ENCODE measurements at regions of chr1 and their contacts with region 1.

Region 1: DNA sequence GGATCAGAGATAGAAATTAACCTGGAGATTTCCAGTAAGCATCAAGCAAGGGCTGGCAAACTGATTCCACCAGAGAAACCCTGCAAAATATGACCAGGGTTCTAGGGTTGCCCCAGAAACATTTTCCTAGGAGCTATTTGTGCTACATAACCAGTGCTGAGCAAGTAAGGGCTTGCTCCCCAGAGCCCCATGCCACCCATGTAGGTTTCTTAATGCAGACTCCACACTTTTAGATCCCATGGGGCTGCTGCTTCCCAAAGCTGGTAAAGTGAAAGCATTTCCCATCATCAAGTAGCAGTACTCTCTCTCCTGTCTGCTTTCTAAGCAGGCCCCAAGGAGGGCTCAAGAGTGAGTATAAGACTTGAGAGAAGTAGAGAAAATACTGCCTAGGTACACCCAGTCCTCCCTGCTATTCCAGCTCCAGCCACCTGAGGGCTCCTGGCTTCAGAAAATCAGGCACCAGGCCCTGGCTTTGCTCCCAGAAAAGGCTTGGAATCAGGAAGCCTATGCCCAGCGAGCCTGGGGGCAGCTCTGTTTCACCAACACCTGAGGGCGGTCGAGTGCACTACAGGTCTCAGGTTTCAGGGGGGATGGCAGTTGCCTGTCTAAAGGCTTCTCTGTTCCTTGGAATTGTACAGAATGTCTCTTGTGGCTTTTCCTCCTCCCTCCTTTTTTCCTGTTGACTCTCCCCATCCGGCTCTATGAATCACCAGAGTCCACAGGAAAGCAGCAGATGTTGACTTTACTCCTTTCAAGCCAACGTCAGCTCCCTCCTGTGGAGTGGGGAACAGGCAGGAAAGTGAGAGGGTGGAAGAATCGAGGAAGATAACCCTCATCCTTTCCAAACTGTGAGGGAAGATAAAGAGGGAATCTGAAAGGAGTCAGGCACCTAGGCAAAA is 6.2 kb upstream of the ANKRD35 start:
- DNase-seq: peak; percentile 99
- ATAC-seq: peak; percentile 94
- H3K4me3 ChIP-seq: peak overlapping the region in 1 of 3 experiments; percentile 21; a peak in 2 of 6 replicates
- H3K27ac ChIP-seq: peak overlapping the region; percentile 63
- H3K4me1 ChIP-seq: peaks cover 81% of the 10 kb centered on the region
- H3K27me3 ChIP-seq: no peaks in the 10 kb centered on the region
- CTCF ChIP-seq: peak; percentile 98
- EP300 ChIP-seq: peak in 1 of 2 experiments; percentile 90; a peak in 2 of 4 replicates
- POLR2A ChIP-seq: no peak
- RAD21 ChIP-seq: peak; percentile 99

Region 2: DNA sequence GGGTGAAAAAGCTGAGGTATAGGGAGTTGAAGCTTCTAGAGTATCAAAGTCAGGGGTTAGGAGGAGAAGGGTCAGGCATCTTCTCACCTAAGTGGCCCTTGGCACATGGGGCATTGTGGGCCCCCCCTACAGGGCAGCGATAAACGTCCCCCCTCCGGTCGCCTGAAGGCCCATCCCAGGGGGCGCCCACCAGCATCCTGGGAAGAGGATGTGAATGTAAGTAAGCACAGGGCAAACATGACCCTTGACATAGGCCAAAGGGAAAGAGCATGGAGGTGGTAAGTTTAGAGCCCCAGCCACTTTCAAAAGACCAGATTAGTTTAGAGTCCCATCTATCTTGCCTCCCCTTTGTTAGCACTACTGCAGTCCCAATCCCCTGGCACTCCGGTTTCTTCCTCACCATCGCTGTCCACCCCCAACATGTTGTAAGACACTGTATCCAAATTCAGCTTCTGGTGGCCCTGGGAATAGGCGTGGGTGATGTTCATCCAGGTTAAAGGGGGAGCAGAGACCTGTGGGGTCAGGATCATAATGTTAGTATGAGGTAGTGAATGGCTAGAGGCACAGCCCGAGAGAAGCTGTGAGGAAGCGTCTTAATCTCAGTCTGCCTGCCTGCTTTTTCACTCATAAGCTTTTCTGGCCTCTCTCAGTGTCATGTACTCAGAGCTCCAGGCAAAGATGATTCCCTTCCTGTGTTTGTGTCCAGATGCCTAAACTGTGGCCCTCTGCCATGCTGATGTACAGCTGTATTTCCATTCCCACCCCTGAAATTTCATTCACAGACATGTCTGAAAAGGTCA is 15.3 kb after region 1 on chr1:
- CTCF ChIA-PET with region 1: interaction called, 93 read pairs
- POLR2A ChIA-PET with region 1: interaction called, 25 read pairs
- in situ Hi-C with region 1: no loop called
- intact Hi-C with region 1: loop called (anchors 1 kb)
- DNase-seq: no peak
- ATAC-seq: peak; percentile 57
- H3K4me3 ChIP-seq: peak overlapping the region in 1 of 3 experiments; percentile 5; a peak in 2 of 6 replicates
- H3K27ac ChIP-seq: no peak overlapping the region
- H3K4me1 ChIP-seq: peaks cover 58% of the 10 kb centered on the region
- H3K27me3 ChIP-seq: no peaks in the 10 kb centered on the region
- CTCF ChIP-seq: peak; percentile 37
- EP300 ChIP-seq: no peak
- POLR2A ChIP-seq: no peak
- RAD21 ChIP-seq: no peak

Region 3: DNA sequence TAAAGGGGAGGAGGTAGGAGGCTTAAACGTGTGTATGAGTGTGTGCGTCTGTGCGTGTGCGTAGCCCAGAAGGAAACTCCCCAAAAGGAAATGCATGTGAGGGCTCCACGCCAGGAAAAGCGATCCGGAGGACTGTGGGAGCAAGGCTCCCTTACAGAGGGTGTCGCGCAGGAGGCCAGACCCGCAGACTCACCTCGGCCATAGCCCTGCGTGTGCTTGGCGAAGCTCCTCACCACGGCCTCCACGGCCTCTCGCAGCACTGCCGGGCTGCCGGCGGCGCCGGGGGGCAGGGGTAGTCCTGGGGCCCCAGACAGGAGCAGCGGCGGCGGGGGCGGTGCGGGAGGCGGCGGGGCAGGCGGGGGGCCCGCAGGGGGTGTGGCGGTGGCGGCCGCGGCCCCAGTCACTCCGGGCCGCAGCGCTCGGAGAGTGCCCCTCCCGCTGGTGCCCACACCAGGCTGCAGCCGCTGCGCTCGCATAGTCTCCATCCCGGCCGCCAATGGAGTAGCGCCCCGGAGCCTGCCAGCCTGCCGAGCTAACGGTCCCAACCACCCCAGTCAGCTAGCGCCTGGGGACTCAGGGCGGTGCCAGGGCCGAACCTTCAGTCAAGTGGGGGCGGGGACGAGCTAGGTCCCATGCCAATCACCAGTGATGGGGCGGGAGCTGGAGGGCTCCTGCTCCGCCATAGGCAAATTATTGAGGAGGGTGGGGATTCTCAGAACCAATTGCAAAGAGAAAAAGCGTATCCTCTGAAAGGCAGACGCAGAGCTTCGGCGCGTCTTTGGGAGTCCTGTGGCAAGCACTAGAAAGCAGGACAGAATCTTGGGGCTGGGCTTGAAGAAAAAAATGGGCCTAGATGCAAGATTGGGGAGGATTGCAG is 65.8 kb after region 1 on chr1 and contains the start of gene LIX1L:
- CTCF ChIA-PET with region 1: no interaction called
- POLR2A ChIA-PET with region 1: interaction called, 3 read pairs
- in situ Hi-C with region 1: no loop called
- intact Hi-C with region 1: loop called (anchors 5 kb)
- DNase-seq: peak; percentile 91
- ATAC-seq: peak; percentile 89
- H3K4me3 ChIP-seq: peak within 1 kb of the TSS; percentile 73 to 89 (median 80)
- H3K27ac ChIP-seq: peak within 1 kb of the TSS; percentile 61
- H3K4me1 ChIP-seq: peaks cover 72% of the 10 kb centered on the region
- H3K27me3 ChIP-seq: peaks cover 0 to 25% of the 10 kb centered on the region in 2 experiments; a peak in 3 of 5 replicates
- CTCF ChIP-seq: no peak
- EP300 ChIP-seq: no peak
- POLR2A ChIP-seq: peak; percentile 59 to 71
- RAD21 ChIP-seq: no peak
- total RNA-seq, gene LIX1L: 8.1 and 10.9 TPM in 2 replicates

Region 4: GRCh38 chr1:145963995-145964901 is 72.4 kb after region 1 on chr1 and contains the starts of genes ANKRD34A and POLR3GL:
- CTCF ChIA-PET with region 1: no interaction called
- POLR2A ChIA-PET with region 1: interaction called, 11 read pairs
- in situ Hi-C with region 1: no loop called
- intact Hi-C with region 1: loop called (anchors 5 kb)
- DNase-seq: peak; percentile 92
- ATAC-seq: peak; percentile 88
- H3K4me3 ChIP-seq: peak within 1 kb of the TSS; percentile 77 to 84 (median 82)
- H3K27ac ChIP-seq: peak within 1 kb of the TSS; percentile 70
- H3K4me1 ChIP-seq: peaks cover 45% of the 10 kb centered on the region
- H3K27me3 ChIP-seq: peaks cover 0 to 28% of the 10 kb centered on the region in 2 experiments; a peak in 3 of 5 replicates
- CTCF ChIP-seq: peak; percentile 22
- EP300 ChIP-seq: no peak
- POLR2A ChIP-seq: peak; percentile 57 to 85
- RAD21 ChIP-seq: 0 out of 2 replicates have a peak, but pooled peaks have one; percentile 29
- total RNA-seq, gene ANKRD34A: 0.07 and 0.14 TPM in 2 replicates
- total RNA-seq, gene POLR3GL: 12.4 and 15.3 TPM in 2 replicates

Region 5: DNA sequence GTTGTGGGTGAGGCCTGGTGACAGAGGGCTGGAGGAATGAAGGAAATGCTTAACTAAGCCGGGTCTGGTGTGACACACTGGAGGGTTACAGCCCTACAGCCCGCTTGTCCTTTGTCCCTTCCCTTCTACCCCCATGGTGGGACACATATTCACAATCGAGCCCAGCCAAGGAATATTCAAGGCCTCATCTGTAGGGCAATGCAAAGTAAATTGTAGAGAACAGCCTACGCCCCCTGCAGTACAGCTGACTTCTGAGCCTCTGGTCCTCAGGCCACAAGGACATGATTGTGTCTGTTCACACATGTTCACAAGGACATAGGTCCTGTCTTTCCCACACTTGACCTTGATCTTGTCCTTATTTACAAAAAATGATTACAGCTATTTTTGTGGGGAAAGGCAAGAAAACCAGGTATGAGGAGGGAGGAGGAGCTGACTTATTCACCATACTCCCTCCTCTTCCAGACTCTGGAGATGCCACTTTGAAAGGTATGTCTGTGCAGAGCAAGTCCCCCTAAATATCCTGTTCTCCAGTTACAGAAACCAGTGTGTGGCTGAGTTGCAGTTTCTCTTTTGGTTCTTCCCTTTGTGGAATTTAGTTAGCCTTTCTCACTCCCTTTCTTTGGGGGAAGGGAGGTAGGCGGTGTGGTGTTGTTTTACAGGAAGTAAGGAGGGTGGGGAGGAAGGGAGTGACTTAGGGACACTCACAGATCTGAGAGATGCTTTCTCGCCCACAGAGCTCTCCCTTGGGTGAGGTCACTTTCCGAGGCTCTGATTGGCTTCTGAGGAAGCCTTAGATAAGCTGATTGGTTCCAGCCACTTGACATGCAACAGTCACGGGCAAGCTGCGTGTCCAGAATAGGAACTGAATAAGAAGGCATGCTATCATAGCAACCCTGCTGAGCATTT is 87.3 kb after region 1 on chr1:
- CTCF ChIA-PET with region 1: interaction called, 4 read pairs
- POLR2A ChIA-PET with region 1: no interaction called
- in situ Hi-C with region 1: no loop called
- intact Hi-C with region 1: loop called (anchors 5 kb)
- DNase-seq: peak; percentile 50
- ATAC-seq: peak; percentile 53
- H3K4me3 ChIP-seq: no peak overlapping the region
- H3K27ac ChIP-seq: no peak overlapping the region
- H3K4me1 ChIP-seq: peaks cover 66% of the 10 kb centered on the region
- H3K27me3 ChIP-seq: no peaks in the 10 kb centered on the region
- CTCF ChIP-seq: peak; percentile 47
- EP300 ChIP-seq: no peak
- POLR2A ChIP-seq: no peak
- RAD21 ChIP-seq: no peak

Region 6: DNA sequence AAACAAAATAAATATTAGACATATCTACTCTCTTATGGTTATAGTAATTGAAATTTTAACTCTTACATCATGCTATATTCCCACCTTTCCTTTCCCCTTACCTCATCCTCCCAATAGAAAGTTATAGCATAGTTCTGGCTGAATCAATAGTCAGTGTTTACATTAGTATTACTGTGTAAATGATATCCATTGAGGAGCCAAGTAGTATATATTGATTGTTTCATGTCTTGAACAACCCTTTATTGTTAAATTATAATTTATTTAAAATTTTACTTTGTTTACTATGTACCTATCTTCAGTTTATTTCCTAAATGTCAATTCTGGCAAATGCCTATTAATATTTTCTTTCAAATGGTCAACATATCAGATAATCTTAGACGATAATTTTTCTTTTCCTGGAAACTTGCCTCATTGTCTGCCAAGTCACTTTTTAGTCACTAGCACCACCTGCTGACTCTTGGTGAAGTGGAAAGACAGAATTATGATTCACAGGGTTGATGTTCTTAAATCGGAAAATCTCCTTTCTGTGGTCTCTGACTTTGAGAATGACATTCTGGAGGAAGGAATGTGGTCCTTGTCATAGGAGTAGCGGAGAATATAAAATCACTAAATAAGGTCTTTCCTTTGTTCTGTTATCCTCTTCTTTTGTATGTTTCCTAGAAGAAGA is 121.0 kb after region 1 on chr1:
- CTCF ChIA-PET with region 1: interaction called, 15 read pairs
- POLR2A ChIA-PET with region 1: interaction called, 7 read pairs
- in situ Hi-C with region 1: loop called (anchors 10 kb)
- intact Hi-C with region 1: loop called (anchors 1 kb)
- DNase-seq: peak; percentile 63
- ATAC-seq: peak; percentile 54
- H3K4me3 ChIP-seq: no peak overlapping the region
- H3K27ac ChIP-seq: no peak overlapping the region
- H3K4me1 ChIP-seq: peaks cover 22% of the 10 kb centered on the region
- H3K27me3 ChIP-seq: no peaks in the 10 kb centered on the region
- CTCF ChIP-seq: peak; percentile 79
- EP300 ChIP-seq: no peak
- POLR2A ChIP-seq: no peak
- RAD21 ChIP-seq: peak; percentile 76

Measured in HepG2 (cell line).